AG04449 (cell line): ENCODE measurements at regions of chr11 and their contacts with region 1.

Region 1: GRCh38 chr11:1882519-1883238 is 9.0 kb downstream of the PRR33 start:
- DNase-seq: no peak
- H3K4me3 ChIP-seq: no peak overlapping the region
- CTCF ChIP-seq: peak; percentile 95

Region 2: GRCh38 chr11:1870721-1871466 is 11.8 kb before region 1 on chr11:
- CTCF ChIA-PET with region 1: interaction called, 18 read pairs
- POLR2A ChIA-PET with region 1: no interaction called
- DNase-seq: no peak
- H3K4me3 ChIP-seq: no peak overlapping the region
- CTCF ChIP-seq: no peak

Region 3: DNA sequence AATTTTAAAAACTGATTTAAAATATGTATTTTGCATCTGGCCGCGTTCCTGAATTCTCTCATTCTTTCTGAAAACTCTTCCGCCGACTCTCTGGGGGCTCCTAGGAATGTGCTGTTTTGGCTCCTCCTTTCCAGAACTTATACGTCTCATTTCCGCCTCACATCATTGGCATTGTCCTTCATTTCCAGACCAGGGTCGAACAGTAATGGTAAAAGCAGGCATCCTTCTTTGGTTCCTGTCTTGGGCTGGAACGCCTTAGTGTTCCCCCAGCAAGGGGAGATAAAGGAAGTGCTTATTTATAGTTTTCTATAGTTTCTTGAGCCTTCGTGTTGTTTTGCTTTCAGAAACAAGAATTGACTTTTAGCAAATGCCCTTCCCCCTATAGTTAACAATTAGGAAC is 25.9 kb after region 1 on chr11:
- CTCF ChIA-PET with region 1: interaction called, 14 read pairs
- POLR2A ChIA-PET with region 1: no interaction called
- DNase-seq: no peak
- H3K4me3 ChIP-seq: no peak overlapping the region
- CTCF ChIP-seq: no peak

Region 4: GRCh38 chr11:1931341-1932099 is 48.8 kb after region 1 on chr11:
- CTCF ChIA-PET with region 1: interaction called, 12 read pairs
- POLR2A ChIA-PET with region 1: no interaction called
- DNase-seq: no peak
- H3K4me3 ChIP-seq: no peak overlapping the region
- CTCF ChIP-seq: no peak

Region 5: GRCh38 chr11:2002807-2003206 is 120.1 kb after region 1 on chr11:
- CTCF ChIA-PET with region 1: interaction called, 29 read pairs
- POLR2A ChIA-PET with region 1: no interaction called
- DNase-seq: no peak
- H3K4me3 ChIP-seq: no peak overlapping the region
- CTCF ChIP-seq: no peak

Region 6: GRCh38 chr11:2390725-2391151 is 508.1 kb after region 1 on chr11:
- CTCF ChIA-PET with region 1: no interaction called
- POLR2A ChIA-PET with region 1: no interaction called
- DNase-seq: no peak
- H3K4me3 ChIP-seq: no peak overlapping the region; the same call in 1 of the 2 replicates
- CTCF ChIP-seq: no peak